ENCODE measurements at regions of chr2 and their contacts with region 1.

Region 1: DNA sequence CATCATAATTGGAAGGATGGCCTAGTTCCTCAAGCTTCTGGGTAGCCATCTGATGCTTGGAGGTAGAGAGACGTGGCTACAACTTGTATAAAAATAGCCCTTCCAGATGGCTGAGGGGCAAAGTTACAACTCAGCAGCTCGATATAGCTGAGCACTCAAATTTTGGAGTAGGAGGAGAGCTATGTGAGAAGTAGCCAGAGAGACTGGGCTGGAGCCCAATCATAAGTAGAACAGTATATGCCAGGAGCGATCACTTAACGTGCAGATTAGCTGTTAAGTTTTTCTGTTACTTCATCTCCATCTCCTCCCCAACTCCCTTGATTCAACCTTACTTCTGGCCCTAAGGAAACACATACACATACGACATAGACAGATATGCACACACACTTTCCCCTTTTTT is 28.8 kb downstream of the CNRIP1 start:
- DNase-seq: no peak
- H3K4me3 ChIP-seq: no peak overlapping the region
- H3K27ac ChIP-seq: no peak overlapping the region
- H3K4me1 ChIP-seq: no peaks in the 10 kb centered on the region
- H3K27me3 ChIP-seq: peaks cover 2% of the 10 kb centered on the region
- CTCF ChIP-seq: no peak

Region 2: GRCh38 chr2:67846370-67847070 is 444.4 kb before region 1 on chr2:
- CTCF ChIA-PET with region 1: no interaction called
- dilution Hi-C with region 1: no loop called
- in situ Hi-C with region 1: no loop called
- intact Hi-C with region 1: loop called (anchors 5 kb)
- DNase-seq: peak; percentile 91
- H3K4me3 ChIP-seq: no peak overlapping the region
- H3K27ac ChIP-seq: peak overlapping the region; percentile 15
- H3K4me1 ChIP-seq: peaks cover 5% of the 10 kb centered on the region
- H3K27me3 ChIP-seq: no peaks in the 10 kb centered on the region
- CTCF ChIP-seq: peak; percentile 53 to 77

Region 3: DNA sequence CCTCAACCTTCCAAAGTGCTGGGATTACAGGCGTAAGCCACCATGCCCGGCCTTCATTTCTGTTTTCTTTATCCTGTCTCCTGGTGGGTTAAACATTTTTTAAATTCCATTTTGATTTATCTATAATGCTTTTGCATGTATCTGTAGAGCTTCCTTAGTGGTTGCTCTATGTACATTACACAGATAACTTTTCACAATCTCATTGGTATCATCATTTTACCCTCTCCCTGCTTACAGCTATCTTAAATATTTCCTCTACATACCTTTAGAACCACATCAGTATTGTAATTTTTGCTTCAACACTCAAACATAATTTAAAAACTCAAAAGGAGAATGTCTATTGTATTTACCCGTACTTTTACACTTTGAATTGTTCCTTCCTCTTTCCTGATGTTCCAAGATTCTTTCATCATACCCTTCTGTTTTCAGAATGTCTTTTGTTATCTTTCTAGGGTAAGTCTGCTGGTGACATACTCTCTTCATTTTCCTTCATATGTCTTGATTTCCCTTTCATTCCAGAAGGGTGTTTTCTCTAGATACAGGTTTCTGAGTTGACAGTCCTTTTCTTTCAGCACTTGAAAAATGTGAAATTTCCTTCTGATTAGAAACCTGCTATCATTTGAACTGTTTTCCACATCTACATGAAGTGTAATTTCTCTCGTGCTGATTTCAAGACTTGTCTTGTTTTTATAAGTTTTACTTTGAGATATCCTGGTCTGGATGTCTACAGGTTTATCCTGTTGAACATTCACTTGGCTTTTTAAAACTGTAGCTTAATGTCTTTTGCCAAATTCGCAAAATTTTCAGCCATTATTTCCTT is 60.5 kb before region 1 on chr2:
- CTCF ChIA-PET with region 1: no interaction called
- dilution Hi-C with region 1: no loop called
- in situ Hi-C with region 1: no loop called
- intact Hi-C with region 1: no loop called
- DNase-seq: no peak
- H3K4me3 ChIP-seq: no peak overlapping the region
- H3K27ac ChIP-seq: no peak overlapping the region
- H3K4me1 ChIP-seq: no peaks in the 10 kb centered on the region
- H3K27me3 ChIP-seq: no peaks in the 10 kb centered on the region
- CTCF ChIP-seq: no peak

Region 4: GRCh38 chr2:68441179-68441993 is 150.5 kb after region 1 on chr2:
- CTCF ChIA-PET with region 1: no interaction called
- dilution Hi-C with region 1: no loop called
- in situ Hi-C with region 1: no loop called
- intact Hi-C with region 1: loop called (anchors 5 kb)
- DNase-seq: peak; percentile 57
- H3K4me3 ChIP-seq: no peak overlapping the region
- H3K27ac ChIP-seq: no peak overlapping the region
- H3K4me1 ChIP-seq: no peaks in the 10 kb centered on the region
- H3K27me3 ChIP-seq: no peaks in the 10 kb centered on the region
- CTCF ChIP-seq: peak; percentile 77 to 87

Measured in mammary epithelial cell (primary cell).